BJ (cell line): ENCODE measurements at regions of chr1 and their contacts with region 1.

Region 1: DNA sequence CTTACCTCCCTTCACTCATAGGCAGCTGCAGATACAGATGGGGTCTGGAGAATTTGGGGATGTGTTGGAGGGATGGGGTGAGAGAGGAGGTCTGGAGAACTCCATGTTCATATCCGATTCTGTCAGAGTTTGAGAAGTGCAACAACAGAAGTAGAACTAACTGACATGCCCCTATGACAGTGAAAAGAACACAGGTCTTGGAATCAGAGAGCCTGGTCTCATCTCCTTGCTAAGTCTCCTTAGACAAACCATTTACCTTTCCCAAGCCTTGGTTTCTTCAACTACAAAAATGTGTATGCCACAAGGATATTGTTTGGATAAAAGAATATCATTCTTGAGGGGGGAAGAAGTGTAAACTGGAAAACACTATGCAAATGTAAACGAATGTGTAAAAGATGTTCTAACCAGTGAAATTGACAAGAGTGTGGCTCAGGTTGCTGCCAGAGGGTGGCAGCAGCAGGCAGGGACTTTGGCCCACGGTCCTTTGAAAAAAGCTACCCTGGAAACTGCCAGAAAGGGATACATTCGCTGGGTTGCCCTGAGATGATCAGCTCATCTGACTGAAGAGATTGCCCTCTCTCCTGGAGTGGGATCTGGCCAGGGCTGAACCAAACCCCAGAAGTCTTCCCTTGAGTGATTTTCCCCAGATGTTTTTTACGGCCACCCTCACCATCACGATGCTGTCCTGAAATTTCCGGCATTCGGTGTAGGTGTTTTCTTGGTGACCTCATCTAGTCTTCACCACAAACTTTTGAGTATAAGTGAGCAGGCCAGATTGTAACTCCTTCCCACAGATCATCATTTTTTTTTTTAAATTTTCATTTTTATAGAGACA is 17.0 kb upstream of the CD2 start:
- DNase-seq: no peak
- H3K4me3 ChIP-seq: no peak overlapping the region
- H3K27me3 ChIP-seq: no peaks in the 10 kb centered on the region
- CTCF ChIP-seq: peak; percentile 88

Region 2: GRCh38 chr1:116133696-116134650 is 603.3 kb before region 1 on chr1:
- CTCF ChIA-PET with region 1: no interaction called
- POLR2A ChIA-PET with region 1: no interaction called
- DNase-seq: no peak
- H3K4me3 ChIP-seq: no peak overlapping the region
- H3K27me3 ChIP-seq: peaks cover 9% of the 10 kb centered on the region
- CTCF ChIP-seq: peak; percentile 47

Region 3: DNA sequence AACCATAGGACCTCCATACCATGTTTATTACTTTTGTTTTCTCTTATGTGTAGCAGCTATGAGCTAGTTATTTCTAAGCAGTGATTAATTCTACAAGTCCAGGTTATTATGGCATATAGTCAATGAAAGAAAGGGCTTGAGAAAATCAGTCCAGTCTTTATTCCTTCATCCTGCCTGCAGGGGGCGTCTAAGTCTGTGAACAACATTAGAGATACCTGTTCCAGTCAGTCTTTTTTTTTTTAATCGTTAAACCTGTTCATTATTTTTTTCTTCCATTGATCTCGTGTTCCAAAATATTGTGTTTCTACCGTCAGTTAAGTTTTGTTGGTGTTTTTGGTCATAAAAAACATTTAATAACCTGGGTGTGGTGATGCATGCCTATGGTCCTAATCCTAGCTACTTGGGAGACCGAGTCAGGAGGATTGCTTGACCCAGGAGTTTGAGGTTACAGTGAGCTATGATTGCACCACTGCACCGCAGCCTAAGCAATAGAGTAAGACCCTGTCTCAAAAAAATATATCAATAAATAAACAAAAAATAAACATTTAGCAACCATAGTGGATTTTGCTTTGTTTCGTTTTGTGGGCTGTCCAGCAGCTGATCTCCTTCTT is 12.4 kb before region 1 on chr1:
- CTCF ChIA-PET with region 1: interaction called, 35 read pairs
- POLR2A ChIA-PET with region 1: no interaction called
- DNase-seq: no peak
- H3K4me3 ChIP-seq: no peak overlapping the region
- H3K27me3 ChIP-seq: peaks cover 1% of the 10 kb centered on the region; the same call in 1 of the 2 replicates
- CTCF ChIP-seq: peak; percentile 82

Region 4: GRCh38 chr1:116748272-116748671 is 11.0 kb after region 1 on chr1:
- CTCF ChIA-PET with region 1: interaction called, 17 read pairs
- POLR2A ChIA-PET with region 1: no interaction called
- DNase-seq: no peak
- H3K4me3 ChIP-seq: no peak overlapping the region
- H3K27me3 ChIP-seq: no peaks in the 10 kb centered on the region
- CTCF ChIP-seq: no peak

Region 5: GRCh38 chr1:116817582-116818064 is 80.4 kb after region 1 on chr1:
- CTCF ChIA-PET with region 1: interaction called, 22 read pairs
- POLR2A ChIA-PET with region 1: no interaction called
- DNase-seq: no peak
- H3K4me3 ChIP-seq: no peak overlapping the region
- H3K27me3 ChIP-seq: no peaks in the 10 kb centered on the region
- CTCF ChIP-seq: peak; percentile 60

Region 6: DNA sequence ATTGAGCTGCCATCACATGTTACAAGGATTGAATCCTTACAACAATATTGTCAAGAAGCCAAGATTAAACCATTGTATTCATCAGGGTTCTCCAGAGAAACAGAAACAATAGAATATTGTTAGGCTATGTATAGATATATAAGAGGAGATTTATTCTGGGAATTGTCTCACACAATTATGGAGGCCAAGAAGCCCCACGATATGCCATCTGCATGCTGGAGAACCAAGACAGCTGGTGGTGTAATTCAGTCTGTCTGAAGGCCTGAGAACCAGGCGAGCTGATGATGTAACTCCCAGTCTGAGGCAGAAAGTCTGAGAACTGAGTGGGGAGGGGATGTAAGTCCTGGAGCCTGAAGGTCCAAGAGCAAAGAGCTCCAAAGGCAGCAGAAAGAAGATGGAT is 308.4 kb after region 1 on chr1:
- CTCF ChIA-PET with region 1: interaction called, 10 read pairs
- POLR2A ChIA-PET with region 1: no interaction called
- DNase-seq: no peak
- H3K4me3 ChIP-seq: no peak overlapping the region
- H3K27me3 ChIP-seq: peaks cover 2% of the 10 kb centered on the region; the same call in 1 of the 2 replicates
- CTCF ChIP-seq: no peak

Region 7: DNA sequence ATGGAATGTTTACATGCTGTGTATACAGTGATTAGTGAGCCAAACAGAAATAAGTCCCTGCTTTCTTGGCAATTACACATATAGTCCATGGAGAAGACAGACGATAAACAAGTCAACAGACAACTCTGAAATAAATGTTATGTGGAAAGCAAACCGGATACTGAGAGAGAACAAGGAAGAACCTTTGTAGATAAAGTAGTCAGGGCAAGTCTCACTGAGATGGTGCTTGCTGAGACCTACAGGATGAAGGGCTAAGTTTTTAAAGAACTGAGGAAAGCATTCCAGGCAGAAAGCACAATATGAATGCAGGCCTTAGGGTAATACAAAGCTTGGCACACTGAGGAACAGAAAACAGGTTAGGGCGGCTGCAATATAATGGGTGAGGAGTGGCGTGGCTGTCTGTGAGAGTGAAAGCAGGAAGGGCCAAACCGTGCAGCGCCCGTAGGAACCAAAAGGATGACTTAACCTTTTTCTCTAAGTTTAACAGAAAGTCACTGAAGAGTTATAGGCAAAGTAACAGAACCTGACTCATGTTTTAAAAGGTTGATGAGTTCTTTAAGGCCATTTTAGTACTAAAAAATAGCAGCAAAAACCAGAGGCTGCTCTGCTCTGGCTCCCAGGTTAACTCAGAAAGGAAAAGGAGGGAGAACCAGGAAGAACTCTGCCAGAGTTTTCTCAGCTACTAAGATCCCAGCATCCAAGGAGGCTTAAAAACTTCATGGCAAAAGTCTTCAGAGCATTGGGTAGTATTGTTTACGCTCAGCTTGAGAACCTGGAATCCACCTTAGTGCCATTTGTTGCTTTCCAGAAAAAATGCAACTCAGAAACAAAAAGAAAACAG is 314.2 kb after region 1 on chr1:
- CTCF ChIA-PET with region 1: interaction called, 33 read pairs
- POLR2A ChIA-PET with region 1: no interaction called
- DNase-seq: no peak
- H3K4me3 ChIP-seq: no peak overlapping the region
- H3K27me3 ChIP-seq: peaks cover 2% of the 10 kb centered on the region; the same call in 1 of the 2 replicates
- CTCF ChIP-seq: no peak

Region 8: DNA sequence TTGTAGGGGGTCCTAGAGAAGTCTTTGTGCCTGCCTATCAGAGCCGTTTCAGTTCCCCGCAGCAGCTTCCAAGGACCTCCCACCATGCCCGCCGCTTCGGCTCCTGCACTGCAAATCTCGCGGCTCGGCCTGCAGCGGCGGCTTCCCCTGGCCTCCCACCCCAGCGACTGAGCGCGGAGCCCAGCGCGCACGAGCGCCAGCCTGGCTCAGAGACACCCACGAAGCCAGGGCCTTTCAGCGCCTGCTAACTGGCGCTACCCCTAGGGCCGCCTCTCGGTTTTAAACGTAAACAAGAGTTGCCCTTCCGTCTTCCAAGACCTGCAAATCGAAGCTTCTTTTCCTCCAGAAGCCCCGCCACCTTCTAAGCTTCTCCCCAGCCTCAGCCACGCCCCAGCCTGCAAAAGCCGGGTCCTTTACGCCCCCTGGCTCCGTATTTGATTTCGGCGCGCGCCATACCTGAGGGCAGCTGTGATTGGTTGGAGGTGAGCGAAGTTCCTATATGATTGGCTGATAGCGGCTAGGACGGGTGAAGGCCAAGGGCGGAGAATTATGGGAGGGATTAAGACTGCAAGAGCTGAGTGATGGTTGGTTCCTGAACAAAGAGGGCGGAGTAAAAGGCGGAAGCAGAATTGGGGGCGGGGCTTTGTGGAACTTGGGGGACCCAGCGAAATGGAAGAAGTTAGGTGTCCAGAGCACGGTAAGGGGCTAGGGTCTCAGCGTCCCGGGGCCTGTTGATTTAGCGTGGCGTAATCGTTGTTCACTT is 322.6 kb after region 1 on chr1 and contains the start of gene TTF2:
- CTCF ChIA-PET with region 1: interaction called, 33 read pairs
- POLR2A ChIA-PET with region 1: no interaction called
- DNase-seq: peak; percentile 93
- H3K4me3 ChIP-seq: peak within 1 kb of the TSS; percentile 78
- H3K27me3 ChIP-seq: no peaks in the 10 kb centered on the region
- CTCF ChIP-seq: peak; percentile 29; the same call in 1 of the 2 replicates
- polyA plus RNA-seq, gene TTF2: 8.9 and 10.1 TPM in 2 replicates